Left colon (tissue), 2 donors: ENCODE measurements at regions of chr22 and their contacts with region 1.

Region 1: DNA sequence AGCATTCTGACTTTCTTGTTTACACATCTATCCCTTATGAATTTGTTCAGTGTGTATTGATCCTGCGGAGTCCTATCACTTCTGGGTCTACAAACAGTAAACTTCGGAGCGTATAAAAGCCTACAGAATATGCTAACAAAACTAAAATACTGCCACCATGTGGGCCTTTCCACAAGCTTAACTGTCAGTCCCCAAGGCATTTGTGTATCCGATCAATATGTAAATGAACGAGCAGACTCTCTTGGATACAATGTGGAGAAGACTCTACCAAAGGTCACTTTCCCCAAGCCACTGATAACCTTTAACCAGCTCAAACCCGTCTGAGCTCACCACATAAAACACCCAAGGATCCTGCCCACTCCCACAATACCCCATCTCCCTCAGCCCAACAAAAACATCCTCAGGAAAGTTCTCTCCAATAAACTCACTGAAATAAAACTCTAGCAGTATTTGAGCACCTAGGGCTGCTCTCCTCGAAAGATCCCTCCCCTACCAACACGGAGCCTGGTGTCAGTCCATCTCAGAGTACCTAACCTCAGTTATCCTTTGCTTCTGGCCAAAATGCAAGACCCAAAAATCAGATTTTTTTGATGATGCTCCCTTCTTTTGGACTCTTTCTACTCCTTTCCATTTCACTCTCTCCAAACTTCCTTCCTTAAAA is 17.8 kb downstream of the ADA2 start:
- DNase-seq: no peak
- ATAC-seq: no peak

Region 2: GRCh38 chr22:17121227-17122195 is 79.9 kb before region 1 on chr22 and contains the start of gene TMEM121B:
- intact Hi-C with region 1: no loop called
- DNase-seq: peak; percentile 42 to 56
- ATAC-seq: peak; percentile 57
- total RNA-seq, gene TMEM121B: 0.15 to 0.42 TPM

Region 3: DNA sequence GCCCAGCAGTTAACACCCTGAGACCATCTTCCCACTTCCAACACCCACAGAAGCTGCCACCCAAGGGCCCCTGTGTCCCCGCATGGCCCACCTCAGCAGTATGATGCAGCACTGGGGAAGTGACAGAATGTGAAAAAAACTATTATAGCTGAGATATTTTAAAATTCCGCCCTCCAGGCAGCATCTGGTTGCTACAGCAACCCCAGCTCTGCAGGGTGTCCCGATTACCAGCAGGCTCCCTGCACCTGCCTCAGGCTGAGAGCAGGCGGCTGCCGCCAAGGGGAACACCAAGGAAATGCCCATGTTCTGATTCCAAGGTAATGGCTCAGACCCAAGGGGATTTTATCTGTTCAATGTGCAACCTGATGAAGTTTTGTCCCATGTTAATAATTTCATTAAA is 69.7 kb before region 1 on chr22:
- intact Hi-C with region 1: loop called in 1 of 2 experiments (anchors 10 kb)
- DNase-seq: no peak
- ATAC-seq: no peak

Region 4: DNA sequence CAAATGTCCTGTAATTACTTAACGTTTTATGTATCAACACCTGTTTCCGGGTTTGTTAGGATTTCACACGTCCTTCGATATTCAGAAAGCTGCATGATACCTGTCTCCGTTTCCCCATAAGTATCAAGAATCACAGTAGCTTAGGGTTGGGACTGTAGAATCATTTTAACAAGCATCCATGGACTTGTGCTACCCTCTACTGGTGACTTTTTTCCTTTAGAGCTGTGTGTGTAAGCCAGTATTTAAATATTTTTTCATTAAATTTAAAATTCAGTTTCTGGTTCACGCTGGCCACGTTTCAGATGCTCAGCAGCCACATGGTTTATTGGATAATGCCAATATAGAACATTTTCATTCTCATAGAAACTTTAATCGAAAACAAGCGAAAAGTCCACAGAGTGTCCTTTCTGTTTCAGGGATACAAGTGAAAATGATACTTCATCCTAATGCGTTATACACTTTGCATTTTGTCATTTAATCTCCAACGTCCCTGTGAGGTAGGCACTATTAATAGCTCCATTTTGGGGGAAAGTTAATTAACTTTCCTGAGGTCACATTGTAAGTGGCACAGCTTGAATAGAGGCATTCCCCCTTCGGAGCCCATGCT is 300.4 kb after region 1 on chr22:
- intact Hi-C with region 1: loop called in 1 of 2 experiments (anchors 10 kb)
- DNase-seq: peak in 1 of 2 donors; percentile 6
- ATAC-seq: peak; percentile 94